ENCODE measurements at regions of chr11 and their contacts with region 1.

Region 1: DNA sequence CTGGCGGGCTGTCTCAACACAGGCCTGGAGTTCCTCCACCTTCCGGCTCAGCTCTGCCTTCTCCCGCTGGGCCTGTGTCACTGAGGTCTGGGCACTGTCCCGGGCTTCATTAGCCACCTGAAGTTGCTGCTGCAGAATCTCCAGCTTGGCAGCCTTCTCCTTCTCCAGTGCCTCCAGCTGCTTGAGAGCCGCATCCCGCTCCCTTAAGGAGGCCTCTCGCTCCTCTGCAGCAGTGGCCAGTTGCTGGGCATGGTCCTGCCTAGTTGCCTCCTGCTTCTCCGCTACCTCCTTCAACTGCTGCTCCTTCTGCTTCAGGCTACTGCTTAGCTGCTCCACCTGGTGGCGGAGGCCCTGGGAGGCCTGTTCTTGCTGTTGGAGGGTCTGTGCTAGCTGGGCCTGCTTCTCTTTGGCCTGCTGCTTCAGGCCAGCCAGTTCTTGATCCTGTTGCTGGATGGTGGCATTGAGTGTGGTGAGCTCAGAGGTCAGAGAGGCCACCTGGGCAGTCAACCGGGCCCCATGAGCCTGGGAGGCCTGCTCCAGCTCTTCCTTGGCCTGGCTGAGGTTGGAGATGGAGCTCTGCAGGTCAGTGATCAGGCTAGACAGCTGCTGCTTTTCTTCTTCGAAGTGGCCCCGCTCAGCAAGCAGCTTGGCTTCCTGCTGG is 16.9 kb downstream of the IL18BP start:
- DNase-seq: no peak
- CTCF ChIP-seq: peak; percentile 71

Region 2: DNA sequence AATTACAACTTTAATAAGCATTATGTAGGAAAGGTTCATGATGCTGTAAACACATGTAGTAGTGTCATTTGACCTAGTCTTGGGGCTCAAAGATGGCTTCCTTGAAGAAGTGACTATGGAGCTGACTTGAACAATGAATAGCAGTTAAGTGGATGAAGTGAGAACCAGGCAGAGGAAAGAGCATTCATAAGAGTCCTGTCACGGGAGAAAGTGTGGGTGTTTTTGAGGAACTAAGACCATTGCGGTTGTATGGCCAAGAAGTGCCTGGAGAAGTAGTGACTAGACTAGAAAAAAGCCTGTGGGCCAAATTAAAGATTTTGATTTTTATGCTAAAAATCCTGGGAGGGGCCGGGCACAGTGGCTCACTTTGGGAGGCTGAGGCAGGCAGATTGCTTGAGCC is 24.1 kb before region 1 on chr11:
- CTCF ChIA-PET with region 1: interaction called, 31 read pairs
- POLR2A ChIA-PET with region 1: no interaction called
- DNase-seq: peak; percentile 55
- CTCF ChIP-seq: no peak

Region 3: DNA sequence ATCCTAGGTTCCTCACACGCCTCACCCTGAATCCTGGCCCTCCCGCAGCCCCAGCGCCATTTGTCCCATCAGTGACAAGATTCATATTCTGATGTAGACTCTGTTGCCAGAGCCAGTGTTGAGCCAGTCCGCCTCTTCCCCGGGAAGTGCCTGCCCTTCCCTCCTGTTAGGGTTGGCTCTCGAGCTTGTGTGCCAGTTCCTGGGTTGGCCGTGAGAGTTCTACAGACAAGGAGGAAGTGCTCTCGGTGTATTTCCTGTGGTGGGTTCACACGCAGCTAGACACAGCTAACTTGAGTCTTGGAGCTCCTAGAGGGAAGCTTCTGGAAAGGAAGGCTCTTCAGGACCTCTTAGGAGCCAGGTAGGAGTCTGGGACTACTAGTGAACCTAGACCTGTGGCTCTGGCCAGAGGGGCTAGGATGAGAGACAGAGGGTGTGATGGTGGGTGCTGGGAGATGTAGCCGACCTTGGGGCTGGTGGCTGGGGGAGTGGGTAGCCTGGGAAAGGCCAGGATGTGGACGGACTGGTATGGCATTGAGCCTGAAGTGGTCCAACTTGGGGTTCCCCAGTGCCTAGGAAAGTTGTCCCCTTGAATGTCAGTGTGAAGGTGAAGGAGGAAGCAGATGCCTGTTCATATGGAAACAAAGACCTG is 16.9 kb before region 1 on chr11 and contains the start of gene IL18BP:
- CTCF ChIA-PET with region 1: interaction called, 31 read pairs
- POLR2A ChIA-PET with region 1: no interaction called
- DNase-seq: peak; percentile 65
- CTCF ChIP-seq: no peak

Region 4: DNA sequence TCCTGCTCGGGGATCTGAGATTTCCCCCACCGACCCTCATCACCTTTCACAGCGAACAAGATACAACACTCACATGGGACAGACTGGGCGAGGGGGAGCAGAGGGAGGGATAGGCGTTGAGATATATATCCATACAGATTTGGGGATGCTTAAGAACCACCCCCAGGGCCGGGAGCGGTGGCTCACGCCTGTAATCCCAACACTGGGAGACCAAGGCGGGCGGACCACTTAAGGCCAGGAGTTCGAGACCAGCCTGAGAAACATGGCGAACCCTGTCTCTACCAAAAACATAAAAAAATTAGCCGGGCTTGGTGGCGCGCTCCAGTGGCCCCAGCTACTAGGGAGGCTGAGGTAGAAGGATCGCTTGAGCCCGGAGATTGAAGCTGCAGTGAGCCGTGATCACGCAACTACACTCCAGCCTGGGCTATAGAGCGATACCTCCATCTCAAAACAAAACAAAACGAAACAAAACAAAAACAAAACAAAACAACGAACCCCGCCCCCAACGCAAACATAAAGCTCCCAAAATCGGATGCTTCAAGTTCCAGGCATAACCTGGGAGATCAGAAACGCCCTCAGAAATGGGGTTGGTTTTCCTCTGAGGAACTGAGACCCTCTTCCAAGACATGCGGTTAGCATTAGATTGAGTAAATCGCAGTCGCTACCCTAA is 65.5 kb after region 1 on chr11:
- CTCF ChIA-PET with region 1: interaction called, 10 read pairs
- POLR2A ChIA-PET with region 1: no interaction called
- DNase-seq: no peak
- CTCF ChIP-seq: no peak